Activated naive CD4-positive, alpha-beta T cell treated with anti-CD3 and anti-CD28 coated beads for 36 hours (primary cell): ENCODE measurements at regions of chr18 and their contacts with region 1.

Region 1: DNA sequence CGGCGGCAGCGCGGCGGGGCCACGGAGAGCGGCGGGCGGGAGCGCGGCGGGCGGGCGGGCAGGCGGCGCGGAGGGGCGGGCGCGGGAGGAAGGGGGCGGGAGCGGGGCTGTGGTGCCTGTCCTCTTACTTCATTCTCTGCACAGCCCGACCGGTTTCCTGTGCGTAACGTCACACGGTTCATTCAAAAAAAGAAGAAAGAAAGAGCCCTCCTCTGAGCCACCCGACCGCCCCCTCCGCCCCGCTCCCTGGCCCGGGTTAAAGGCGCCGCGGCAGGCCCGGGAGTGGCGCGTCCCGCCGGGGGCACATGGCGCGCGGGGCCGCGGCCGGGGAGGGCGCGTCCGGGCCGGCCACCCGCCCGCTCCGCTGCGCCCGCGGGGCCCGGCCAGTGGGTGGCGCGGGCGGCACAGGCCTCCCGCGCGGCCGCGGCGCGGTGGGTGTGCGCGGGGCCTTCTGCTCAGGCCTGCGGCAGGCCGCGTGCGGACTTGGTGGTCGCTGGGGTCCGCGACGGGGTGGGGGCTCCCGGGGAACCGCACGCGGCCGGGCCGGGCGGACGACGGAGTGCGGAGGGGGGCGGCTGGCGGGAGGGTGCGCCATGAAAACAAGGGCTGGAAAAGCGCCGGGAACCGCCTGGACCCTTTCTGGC is 599 bp upstream of the BCL2 start:
- DNase-seq: peak; percentile 88
- H3K4me3 Mint-ChIP-seq: peak overlapping the region; percentile 81
- H3K27ac Mint-ChIP-seq: peak overlapping the region; percentile 90
- H3K4me1 Mint-ChIP-seq: peaks cover 24% of the 10 kb centered on the region
- H3K27me3 Mint-ChIP-seq: no peaks in the 10 kb centered on the region

Region 2: DNA sequence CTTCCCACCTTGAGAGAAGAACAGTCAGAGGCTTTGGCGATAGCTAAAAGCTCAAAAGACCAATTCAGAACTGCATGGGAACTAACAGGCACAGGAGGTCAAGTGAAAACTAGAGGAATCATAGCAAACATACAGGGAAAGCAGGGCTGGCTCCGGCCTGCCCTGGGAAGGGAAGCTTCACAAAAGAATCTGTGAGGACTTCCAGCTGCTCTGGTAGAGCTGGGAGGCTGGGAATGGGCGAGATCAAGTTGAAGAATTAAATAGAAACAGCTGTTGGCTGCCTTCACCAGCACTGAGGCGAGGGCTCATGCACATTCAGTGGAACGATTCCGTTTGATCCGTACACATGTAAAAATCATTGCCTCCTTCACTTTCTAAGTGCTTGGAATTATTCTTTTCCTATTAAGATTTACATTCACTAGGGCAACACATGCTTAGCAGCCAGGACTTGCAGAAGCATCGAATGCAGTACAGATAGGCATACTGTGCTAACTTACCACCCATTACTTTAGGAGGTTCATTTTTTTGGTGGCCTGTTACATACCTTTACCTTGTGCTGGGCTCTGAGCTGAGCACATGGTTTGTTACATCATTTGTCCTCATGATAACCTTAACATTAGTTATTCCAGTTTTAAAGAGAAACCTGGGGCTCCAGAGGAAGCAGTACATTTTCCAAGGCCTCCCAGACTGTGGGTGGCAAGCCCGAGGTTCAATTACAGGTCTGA is 1302.0 kb before region 1 on chr18:
- CTCF ChIA-PET with region 1: no interaction called
- intact Hi-C with region 1: no loop called
- DNase-seq: no peak
- H3K4me3 Mint-ChIP-seq: no peak overlapping the region
- H3K27ac Mint-ChIP-seq: no peak overlapping the region
- H3K4me1 Mint-ChIP-seq: no peaks in the 10 kb centered on the region
- H3K27me3 Mint-ChIP-seq: no peaks in the 10 kb centered on the region

Region 3: DNA sequence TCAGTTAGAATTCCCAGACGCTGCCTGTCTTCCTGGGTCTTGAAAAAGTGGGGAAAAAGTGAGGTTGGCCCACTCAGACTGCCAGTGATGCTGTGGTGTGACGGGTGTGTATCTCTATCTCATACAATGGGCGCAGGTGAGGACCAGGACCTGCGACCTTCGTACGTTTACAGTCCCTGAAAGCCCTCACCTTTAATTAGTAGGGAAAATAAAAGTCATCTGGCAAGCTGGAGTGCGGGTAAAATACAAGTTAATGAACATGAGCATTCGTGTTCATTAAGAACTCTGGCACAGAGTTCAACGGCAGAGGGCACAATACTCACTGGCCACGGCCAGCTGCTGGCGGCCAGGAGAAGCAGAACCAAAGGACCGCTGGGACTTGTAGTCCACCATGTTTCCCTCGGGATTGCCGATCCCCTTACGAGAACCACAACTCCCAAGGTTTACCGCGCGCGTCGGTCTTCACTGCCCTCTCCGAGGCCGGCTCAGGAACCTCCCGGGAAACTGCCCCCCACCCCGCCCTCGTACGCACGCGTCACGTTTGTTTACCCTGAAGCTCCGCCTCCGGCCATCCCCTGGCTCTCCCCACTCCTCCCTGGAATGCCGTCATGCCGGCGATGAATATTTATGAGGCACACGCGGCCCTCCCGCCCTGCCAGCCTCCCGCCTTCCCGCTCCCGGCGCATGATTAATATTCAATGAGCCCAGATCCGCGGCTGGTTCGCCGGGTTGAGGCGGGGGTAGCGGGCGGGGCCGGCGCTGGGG is 605.3 kb before region 1 on chr18:
- CTCF ChIA-PET with region 1: interaction called, 3 read pairs
- intact Hi-C with region 1: loop called (anchors 2 kb)
- DNase-seq: peak; percentile 98
- H3K4me3 Mint-ChIP-seq: peak overlapping the region; percentile 79
- H3K27ac Mint-ChIP-seq: peak overlapping the region; percentile 74
- H3K4me1 Mint-ChIP-seq: peaks cover 26% of the 10 kb centered on the region
- H3K27me3 Mint-ChIP-seq: peaks cover 6% of the 10 kb centered on the region

Region 4: DNA sequence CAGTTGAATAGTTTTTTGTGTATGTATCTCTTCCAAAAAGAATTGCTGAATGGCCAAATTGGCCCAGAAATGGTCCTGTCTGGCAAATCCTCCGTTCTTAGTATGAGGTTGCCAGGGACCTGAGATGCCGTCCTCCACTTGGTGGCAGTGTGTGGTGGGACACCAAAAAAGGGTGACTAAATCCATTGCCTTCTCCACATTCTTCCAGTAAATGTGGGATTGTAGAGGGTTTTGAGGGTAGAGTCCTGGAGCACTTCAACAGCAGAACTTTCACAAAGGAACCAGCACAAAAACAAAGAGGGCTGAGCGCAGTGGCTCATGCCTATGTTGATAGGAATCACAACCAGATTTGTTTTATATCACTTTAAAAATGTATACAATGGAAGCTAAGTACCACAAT is 200.5 kb before region 1 on chr18:
- CTCF ChIA-PET with region 1: interaction called, 18 read pairs
- intact Hi-C with region 1: loop called (anchors 1 kb)
- DNase-seq: peak; percentile 64
- H3K4me3 Mint-ChIP-seq: no peak overlapping the region
- H3K27ac Mint-ChIP-seq: no peak overlapping the region
- H3K4me1 Mint-ChIP-seq: peaks cover 2% of the 10 kb centered on the region
- H3K27me3 Mint-ChIP-seq: peaks cover 2% of the 10 kb centered on the region

Region 5: GRCh38 chr18:63161761-63162195 is 158.4 kb before region 1 on chr18:
- CTCF ChIA-PET with region 1: interaction called, 84 read pairs
- intact Hi-C with region 1: loop called (anchors 1 kb)
- DNase-seq: peak; percentile 94
- H3K4me3 Mint-ChIP-seq: peak overlapping the region; percentile 74
- H3K27ac Mint-ChIP-seq: peak overlapping the region; percentile 99
- H3K4me1 Mint-ChIP-seq: peaks cover 93% of the 10 kb centered on the region
- H3K27me3 Mint-ChIP-seq: no peaks in the 10 kb centered on the region

Region 6: DNA sequence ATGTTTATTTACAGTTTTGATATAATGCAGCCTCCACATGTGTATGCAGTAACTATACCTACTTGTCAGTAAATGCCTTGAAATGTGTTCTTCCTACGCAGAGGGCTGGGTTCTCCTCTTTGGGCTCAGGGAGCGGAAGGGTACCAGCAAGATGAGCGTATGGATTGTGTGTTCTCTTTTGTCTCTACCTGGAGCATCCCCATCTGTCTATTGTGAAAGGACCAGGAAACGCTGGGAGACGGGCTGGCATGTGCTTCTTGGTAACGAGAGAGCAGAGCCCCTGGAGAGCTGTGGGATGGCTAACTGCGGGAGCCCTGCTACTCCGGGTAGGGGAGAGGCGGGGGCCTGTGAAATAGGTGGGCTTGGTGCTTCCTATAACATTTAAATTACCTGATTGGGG is 81.5 kb before region 1 on chr18:
- CTCF ChIA-PET with region 1: no interaction called
- intact Hi-C with region 1: no loop called
- DNase-seq: no peak
- H3K4me3 Mint-ChIP-seq: no peak overlapping the region
- H3K27ac Mint-ChIP-seq: no peak overlapping the region
- H3K4me1 Mint-ChIP-seq: peaks cover 59% of the 10 kb centered on the region
- H3K27me3 Mint-ChIP-seq: no peaks in the 10 kb centered on the region

Region 7: GRCh38 chr18:63267975-63268721 is 52.0 kb before region 1 on chr18:
- CTCF ChIA-PET with region 1: interaction called, 12 read pairs
- intact Hi-C with region 1: loop called (anchors 2 kb)
- DNase-seq: no peak
- H3K4me3 Mint-ChIP-seq: no peak overlapping the region
- H3K27ac Mint-ChIP-seq: peak overlapping the region; percentile 19
- H3K4me1 Mint-ChIP-seq: peaks cover 69% of the 10 kb centered on the region
- H3K27me3 Mint-ChIP-seq: no peaks in the 10 kb centered on the region

Region 8: DNA sequence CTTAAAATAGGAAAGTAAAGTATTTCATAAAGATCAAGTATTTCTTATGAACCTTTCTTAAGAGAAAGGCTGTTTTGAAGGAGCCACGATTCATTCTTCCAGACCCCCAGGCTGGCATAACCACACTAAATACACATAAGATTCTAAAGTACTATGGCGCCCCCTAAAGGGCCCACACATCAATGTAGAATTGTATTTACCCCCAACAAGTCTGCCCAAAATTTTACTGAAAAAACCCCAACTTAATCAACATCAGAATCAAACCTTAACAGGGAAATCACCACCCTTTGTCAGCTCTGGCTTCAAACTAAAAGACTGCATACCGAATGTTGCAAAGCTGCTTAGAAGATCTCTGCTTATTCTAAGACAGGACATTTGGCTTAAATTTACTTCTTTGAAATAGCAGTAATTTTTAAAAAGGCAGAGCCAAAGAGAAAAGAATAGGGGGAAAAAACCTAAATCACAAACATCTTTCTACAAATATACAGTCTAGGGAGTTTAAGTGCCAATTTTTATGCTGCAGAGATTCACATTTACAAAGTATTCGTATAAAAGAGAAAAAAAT is 19.8 kb after region 1 on chr18:
- CTCF ChIA-PET with region 1: interaction called, 10 read pairs
- intact Hi-C with region 1: loop called (anchors 1 kb)
- DNase-seq: peak; percentile 65
- H3K4me3 Mint-ChIP-seq: no peak overlapping the region
- H3K27ac Mint-ChIP-seq: no peak overlapping the region
- H3K4me1 Mint-ChIP-seq: peaks cover 12% of the 10 kb centered on the region
- H3K27me3 Mint-ChIP-seq: no peaks in the 10 kb centered on the region

Region 9: DNA sequence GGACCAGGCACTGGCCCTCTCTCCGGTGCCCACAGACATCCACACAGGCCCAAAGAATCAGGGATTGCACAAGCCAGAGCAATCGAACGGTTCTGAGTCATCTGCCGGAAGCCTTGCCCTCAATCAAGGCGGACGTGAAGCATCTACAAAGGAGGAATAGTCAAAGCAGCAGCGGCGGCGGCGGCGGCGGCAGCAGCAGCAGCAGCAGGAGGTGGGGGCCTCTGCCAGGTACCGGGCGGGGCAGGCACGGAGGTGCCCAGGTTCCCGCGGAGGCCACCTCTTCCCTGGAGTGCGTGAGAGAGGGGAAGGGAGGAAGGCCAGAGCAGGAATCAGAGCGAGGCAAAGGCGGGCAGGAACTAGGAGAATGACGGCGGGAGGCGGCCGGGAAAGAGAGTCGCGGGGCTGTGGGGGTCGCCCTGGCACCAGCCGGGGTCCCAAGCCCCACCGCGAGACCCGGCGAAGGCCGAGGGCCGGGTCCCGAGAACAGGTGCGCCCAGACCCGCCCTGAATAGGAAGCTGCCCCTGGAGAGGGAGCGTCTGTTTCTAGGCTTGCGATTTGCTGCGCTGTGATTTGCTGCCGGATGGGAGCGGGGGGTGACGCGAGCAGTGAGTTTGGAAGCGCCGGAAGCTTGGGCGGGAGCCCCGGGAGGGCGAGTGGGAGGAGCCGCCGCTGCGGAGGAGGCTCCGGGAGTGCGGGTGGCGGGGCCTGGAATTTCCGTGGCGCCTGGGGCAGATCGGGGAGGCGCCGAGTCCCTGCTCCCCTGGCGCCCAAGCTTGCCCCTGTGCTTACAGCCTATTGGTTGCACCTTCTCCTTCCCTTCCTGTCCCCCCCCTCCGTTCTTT is 650.0 kb after region 1 on chr18 and contains the start of gene SERPINB8:
- CTCF ChIA-PET with region 1: no interaction called
- intact Hi-C with region 1: loop called (anchors 2 kb)
- DNase-seq: peak; percentile 91
- H3K4me3 Mint-ChIP-seq: peak within 1 kb of the TSS; percentile 93
- H3K27ac Mint-ChIP-seq: peak within 1 kb of the TSS; percentile 97
- H3K4me1 Mint-ChIP-seq: peaks cover 35% of the 10 kb centered on the region
- H3K27me3 Mint-ChIP-seq: no peaks in the 10 kb centered on the region
- total RNA-seq, gene SERPINB8: 10.5 to 11.7 TPM